ENCODE measurements at regions of chr1 and their contacts with region 1.

Region 1: DNA sequence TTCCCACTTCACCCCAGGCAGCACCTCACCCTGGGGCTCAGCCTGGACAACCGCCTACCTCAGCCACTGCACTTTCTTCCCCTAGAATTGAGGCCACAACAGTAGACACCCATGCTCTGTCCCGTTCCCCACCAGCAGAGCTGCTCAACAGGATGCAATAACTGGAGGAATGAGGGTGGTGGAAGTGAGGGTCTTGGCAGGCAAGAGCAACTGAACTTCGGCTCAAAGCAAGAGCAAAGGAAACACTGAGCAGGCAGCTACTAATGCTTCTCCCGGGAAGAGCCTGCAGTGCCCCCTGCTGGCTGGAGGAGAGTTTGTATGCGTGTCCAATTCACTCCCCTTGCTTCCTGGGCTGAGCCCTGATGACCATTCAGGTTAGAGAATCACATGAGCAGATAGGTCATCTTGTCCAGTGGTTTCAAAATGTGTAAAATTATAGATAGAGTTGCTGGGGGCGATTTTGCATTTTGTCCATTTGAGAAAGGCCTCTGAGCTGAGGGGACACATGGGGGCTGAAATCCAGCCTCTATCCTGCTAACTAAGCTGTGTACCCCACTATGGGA is 13.9 kb downstream of the NT5C1A start:
- DNase-seq: peak; percentile 71
- H3K4me3 Mint-ChIP-seq: no peak overlapping the region
- H3K27ac Mint-ChIP-seq: peak overlapping the region; percentile 31
- H3K4me1 Mint-ChIP-seq: peaks cover 7% of the 10 kb centered on the region
- H3K27me3 Mint-ChIP-seq: peaks cover 13% of the 10 kb centered on the region

Region 2: GRCh38 chr1:39609618-39610331 is 48.2 kb before region 1 on chr1:
- CTCF ChIA-PET with region 1: interaction called, 14 read pairs
- POLR2A ChIA-PET with region 1: no interaction called
- DNase-seq: peak; percentile 80
- H3K4me3 Mint-ChIP-seq: no peak overlapping the region
- H3K27ac Mint-ChIP-seq: no peak overlapping the region
- H3K4me1 Mint-ChIP-seq: peaks cover 12% of the 10 kb centered on the region
- H3K27me3 Mint-ChIP-seq: no peaks in the 10 kb centered on the region

Region 3: GRCh38 chr1:39646232-39647081 is 11.5 kb before region 1 on chr1:
- CTCF ChIA-PET with region 1: interaction called, 25 read pairs
- POLR2A ChIA-PET with region 1: no interaction called
- DNase-seq: no peak
- H3K4me3 Mint-ChIP-seq: no peak overlapping the region
- H3K27ac Mint-ChIP-seq: no peak overlapping the region
- H3K4me1 Mint-ChIP-seq: no peaks in the 10 kb centered on the region
- H3K27me3 Mint-ChIP-seq: peaks cover 3% of the 10 kb centered on the region

Region 4: DNA sequence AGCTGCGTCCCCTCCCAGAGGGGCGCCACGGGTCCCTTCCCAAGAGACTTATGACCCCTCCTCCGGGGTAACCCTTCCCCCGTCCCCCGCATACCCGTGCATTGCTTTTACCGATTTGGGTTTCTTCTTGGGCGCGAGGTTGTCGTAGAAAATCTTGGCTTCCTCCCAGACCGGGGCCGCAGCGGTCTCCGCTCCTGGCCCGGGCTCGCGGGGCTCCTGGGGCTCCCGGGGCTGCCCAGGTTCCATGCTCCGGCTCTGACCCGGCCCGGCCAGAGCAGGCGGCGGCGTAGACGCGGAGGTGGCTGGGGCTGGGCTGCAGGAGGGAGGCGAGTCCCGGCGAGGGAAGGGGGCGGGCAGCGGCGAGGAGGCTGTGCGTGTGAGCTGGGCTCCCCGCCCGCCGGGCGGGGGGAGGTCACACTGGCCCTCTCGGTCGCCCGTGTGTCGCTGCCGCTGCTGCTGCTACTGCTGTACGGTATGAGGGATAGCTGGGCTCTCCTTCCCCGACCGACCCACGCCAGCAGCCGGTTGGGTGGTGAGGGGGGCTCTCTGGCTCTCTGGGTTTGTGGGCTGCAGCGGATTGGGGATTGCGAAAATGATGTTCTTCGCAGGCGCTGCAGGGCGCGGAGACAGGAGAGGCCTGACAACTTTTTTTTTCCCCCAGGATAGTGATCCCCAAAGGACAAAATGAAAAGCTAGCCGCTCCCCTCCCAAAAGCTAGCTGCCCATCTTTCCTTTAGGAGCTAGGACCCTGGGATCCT is 14.0 kb after region 1 on chr1 and contains the start of gene NT5C1A:
- CTCF ChIA-PET with region 1: interaction called, 31 read pairs
- POLR2A ChIA-PET with region 1: no interaction called
- DNase-seq: no peak
- H3K4me3 Mint-ChIP-seq: peak within 1 kb of the TSS; percentile 8
- H3K27ac Mint-ChIP-seq: no peak within 1 kb of the TSS
- H3K4me1 Mint-ChIP-seq: peaks cover 10% of the 10 kb centered on the region
- H3K27me3 Mint-ChIP-seq: peaks cover 41% of the 10 kb centered on the region
- total RNA-seq, gene NT5C1A: not detected